PC-3 (cell line): ENCODE measurements at regions of chr20 and their contacts with region 1.

Region 1: DNA sequence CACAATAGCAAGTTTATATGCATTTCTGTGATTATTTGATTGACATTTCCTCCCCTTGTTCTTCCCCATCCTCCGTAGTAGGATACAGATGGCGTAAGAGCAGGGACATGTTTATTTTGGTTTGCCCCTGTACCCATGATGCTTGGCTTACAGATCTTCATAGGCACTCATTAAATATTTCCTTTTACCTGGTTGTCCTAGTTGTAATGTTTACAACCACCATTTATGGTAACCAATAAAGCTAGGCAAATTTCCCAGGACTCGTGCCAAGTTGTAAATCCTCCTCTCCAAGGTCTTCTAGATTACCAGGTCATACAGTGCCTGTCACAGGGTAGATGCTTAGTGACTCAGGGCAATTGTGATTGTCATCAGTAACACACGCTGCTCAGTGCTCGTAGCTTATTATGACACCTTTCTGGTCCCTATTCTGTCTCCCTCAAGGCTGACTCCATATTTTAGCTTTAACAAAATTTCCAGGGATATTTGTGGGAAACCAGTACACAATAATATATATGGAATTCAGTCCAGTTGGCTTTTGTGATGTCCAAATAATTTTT is 24.8 kb downstream of the CYP24A1 start:
- DNase-seq: peak; percentile 100
- ATAC-seq: peak; percentile 96
- H3K4me3 ChIP-seq: no peak overlapping the region
- H3K27ac ChIP-seq: peak overlapping the region; percentile 7; the same call in 1 of the 2 replicates
- H3K4me1 ChIP-seq: peaks cover 24% of the 10 kb centered on the region
- H3K27me3 ChIP-seq: no peaks in the 10 kb centered on the region
- CTCF ChIP-seq: no peak

Region 2: DNA sequence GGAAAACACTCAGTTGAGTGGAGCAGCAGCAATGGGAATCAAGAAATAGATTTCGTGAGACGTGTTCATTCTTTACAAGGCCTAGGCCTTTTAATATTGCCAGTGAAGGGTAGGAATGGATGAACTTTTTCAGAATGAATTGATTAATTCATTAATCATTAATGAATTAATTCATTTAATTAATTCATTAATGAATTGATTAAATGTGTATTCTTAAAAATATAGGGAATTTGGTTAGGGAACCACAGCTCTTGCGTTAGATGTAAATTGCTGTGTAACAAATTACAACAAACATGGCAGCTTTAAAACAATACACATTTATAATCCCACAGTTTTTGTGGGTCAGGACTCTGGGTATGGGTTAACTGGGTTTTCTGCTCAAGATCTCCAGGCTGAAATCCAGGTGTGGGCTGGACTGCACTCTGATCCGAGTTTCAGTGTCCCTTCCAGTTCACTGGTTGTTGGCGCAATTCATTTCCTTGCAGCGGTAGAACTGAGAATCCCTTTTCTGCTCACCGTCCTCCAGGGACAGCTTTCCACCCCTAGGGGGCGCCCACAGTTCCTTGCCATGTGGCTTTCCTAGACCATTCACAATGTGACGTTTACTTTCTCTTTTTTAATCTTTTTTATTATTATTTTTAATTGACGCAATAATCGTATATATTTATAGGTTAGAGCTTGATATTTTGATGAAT is 45.8 kb before region 1 on chr20:
- CTCF ChIA-PET with region 1: interaction called, 4 read pairs
- POLR2A ChIA-PET with region 1: no interaction called
- intact Hi-C with region 1: loop called (anchors 2 kb)
- DNase-seq: peak; percentile 92
- ATAC-seq: peak; percentile 96
- H3K4me3 ChIP-seq: no peak overlapping the region
- H3K27ac ChIP-seq: no peak overlapping the region
- H3K4me1 ChIP-seq: no peaks in the 10 kb centered on the region
- H3K27me3 ChIP-seq: no peaks in the 10 kb centered on the region
- CTCF ChIP-seq: peak; percentile 97

Region 3: DNA sequence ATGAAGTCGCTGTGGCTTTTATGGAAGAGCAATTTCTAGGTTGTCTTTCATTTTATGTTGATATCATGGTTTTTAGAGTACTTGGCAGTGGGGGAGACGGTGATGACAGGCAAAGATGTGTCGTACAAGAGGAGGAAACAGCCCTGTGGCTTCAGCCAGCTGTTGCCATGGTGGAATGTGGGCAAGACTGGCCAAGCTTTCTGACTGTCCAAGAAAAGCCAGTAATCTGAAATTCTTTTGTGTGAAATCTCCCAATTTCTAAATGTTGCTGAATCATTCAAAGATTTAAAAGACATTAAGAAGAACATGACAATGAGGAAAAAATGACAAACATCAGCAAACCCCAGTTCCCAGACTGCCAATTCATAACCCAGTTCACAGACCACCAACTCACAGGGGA is 82.0 kb after region 1 on chr20:
- CTCF ChIA-PET with region 1: no interaction called
- POLR2A ChIA-PET with region 1: no interaction called
- intact Hi-C with region 1: no loop called
- DNase-seq: no peak
- ATAC-seq: no peak
- H3K4me3 ChIP-seq: no peak overlapping the region
- H3K27ac ChIP-seq: no peak overlapping the region
- H3K4me1 ChIP-seq: peaks cover 3% of the 10 kb centered on the region; the same call in 1 of the 2 replicates
- H3K27me3 ChIP-seq: peaks cover 12% of the 10 kb centered on the region
- CTCF ChIP-seq: no peak

Region 4: GRCh38 chr20:54326655-54327054 is 177.6 kb after region 1 on chr20:
- CTCF ChIA-PET with region 1: no interaction called
- POLR2A ChIA-PET with region 1: no interaction called
- intact Hi-C with region 1: no loop called
- DNase-seq: no peak
- ATAC-seq: no peak
- H3K4me3 ChIP-seq: no peak overlapping the region
- H3K27ac ChIP-seq: no peak overlapping the region
- H3K4me1 ChIP-seq: no peaks in the 10 kb centered on the region
- H3K27me3 ChIP-seq: peaks cover 53% of the 10 kb centered on the region
- CTCF ChIP-seq: no peak

Region 5: GRCh38 chr20:54698356-54698755 is 549.3 kb after region 1 on chr20:
- CTCF ChIA-PET with region 1: no interaction called
- POLR2A ChIA-PET with region 1: no interaction called
- intact Hi-C with region 1: no loop called
- DNase-seq: no peak
- ATAC-seq: no peak
- H3K4me3 ChIP-seq: no peak overlapping the region
- H3K27ac ChIP-seq: no peak overlapping the region
- H3K4me1 ChIP-seq: no peaks in the 10 kb centered on the region
- H3K27me3 ChIP-seq: peaks cover 4% of the 10 kb centered on the region; the same call in 1 of the 2 replicates
- CTCF ChIP-seq: no peak